PC-3 (cell line): ENCODE measurements at regions of chr11 and their contacts with region 1.

Region 1: GRCh38 chr11:44133335-44133946 is 38.0 kb downstream of the EXT2 start:
- DNase-seq: peak; percentile 59
- ATAC-seq: peak; percentile 69
- H3K4me3 ChIP-seq: no peak overlapping the region
- H3K27ac ChIP-seq: no peak overlapping the region
- H3K4me1 ChIP-seq: peaks cover 14% of the 10 kb centered on the region
- H3K27me3 ChIP-seq: no peaks in the 10 kb centered on the region
- CTCF ChIP-seq: peak; percentile 72

Region 2: DNA sequence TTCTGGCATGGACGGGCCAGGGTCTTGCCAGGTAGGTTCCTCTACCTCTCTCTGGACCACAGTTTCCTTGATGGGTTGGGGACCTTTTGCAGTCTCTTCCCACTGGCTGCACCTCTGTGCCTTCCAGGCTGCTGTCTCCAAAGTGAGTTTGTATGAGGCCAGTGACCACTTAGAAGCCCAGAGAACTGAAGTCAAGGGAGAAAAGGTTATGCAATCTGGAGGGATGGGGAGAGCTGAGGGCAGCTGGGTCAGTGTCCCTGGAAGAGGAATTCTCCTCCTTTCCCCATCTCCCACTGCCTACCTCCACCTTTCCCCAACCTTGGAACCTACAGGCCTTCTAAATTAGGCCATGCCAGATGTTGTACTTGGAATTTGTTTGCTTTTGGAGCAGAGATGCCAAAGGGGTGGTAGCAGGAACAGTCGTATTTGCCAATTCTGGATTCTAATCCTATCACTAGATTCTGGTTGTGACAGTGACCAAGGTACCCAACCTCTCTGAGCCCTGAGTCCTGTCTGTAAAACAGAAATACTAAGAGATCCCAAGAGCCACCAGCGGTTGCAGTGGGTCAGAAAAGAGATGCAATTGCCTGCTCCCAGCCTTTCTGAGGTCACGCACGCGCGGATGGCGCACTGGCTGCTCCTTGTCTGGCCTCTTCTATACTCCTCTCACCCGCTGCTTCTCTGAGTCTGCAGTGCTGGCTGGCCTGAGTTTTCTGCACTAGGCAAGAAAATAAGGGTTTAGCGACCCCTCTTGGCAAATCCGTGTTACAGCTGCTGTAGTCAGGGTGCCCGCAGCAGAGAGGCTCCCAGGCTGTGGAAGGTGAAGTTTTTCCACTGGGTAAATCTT is 96.4 kb before region 1 on chr11:
- CTCF ChIA-PET with region 1: no interaction called
- POLR2A ChIA-PET with region 1: no interaction called
- intact Hi-C with region 1: no loop called
- DNase-seq: peak; percentile 79
- ATAC-seq: peak; percentile 97
- H3K4me3 ChIP-seq: no peak overlapping the region
- H3K27ac ChIP-seq: no peak overlapping the region
- H3K4me1 ChIP-seq: no peaks in the 10 kb centered on the region
- H3K27me3 ChIP-seq: no peaks in the 10 kb centered on the region
- CTCF ChIP-seq: peak; percentile 84

Region 3: GRCh38 chr11:44208976-44209603 is 75.6 kb after region 1 on chr11:
- CTCF ChIA-PET with region 1: interaction called, 15 read pairs
- POLR2A ChIA-PET with region 1: no interaction called
- intact Hi-C with region 1: no loop called
- DNase-seq: no peak
- ATAC-seq: no peak
- H3K4me3 ChIP-seq: no peak overlapping the region
- H3K27ac ChIP-seq: no peak overlapping the region
- H3K4me1 ChIP-seq: no peaks in the 10 kb centered on the region
- H3K27me3 ChIP-seq: no peaks in the 10 kb centered on the region
- CTCF ChIP-seq: no peak

Region 4: DNA sequence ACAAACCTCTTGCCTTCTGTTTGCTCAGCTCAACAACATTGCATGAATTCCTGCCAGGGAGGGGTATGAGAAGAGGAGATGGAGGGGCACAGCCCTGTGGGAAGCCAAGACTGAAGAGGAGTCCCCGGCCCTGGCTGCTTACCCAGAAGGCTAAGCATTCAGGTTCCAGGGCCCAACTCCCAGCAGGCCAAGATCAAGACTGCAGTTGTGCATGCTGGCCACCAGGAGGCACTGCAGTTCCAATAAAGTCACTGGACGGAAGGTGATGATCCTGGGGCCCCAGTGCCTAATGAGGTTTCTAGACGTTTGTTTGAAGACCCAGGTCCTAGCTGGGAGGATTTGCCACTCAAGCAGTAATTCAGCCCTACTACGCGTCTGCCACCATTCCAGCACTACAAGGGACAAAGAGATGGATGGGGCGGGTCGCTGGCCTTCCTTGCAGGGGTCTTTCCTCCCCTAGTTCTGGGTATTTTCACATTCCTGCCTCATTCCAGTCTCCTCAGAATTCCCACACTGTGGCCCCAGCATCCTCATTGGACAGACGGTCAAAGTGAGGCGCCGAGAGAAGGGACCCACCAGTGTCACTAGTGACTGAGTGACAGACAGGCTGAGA is 152.9 kb after region 1 on chr11:
- CTCF ChIA-PET with region 1: no interaction called
- POLR2A ChIA-PET with region 1: no interaction called
- intact Hi-C with region 1: loop called (anchors 10 kb)
- DNase-seq: peak; percentile 70
- ATAC-seq: peak; percentile 60
- H3K4me3 ChIP-seq: no peak overlapping the region
- H3K27ac ChIP-seq: no peak overlapping the region
- H3K4me1 ChIP-seq: no peaks in the 10 kb centered on the region
- H3K27me3 ChIP-seq: no peaks in the 10 kb centered on the region
- CTCF ChIP-seq: peak; percentile 94

Region 5: GRCh38 chr11:44464741-44465140 is 331.3 kb after region 1 on chr11:
- CTCF ChIA-PET with region 1: no interaction called
- POLR2A ChIA-PET with region 1: no interaction called
- intact Hi-C with region 1: loop called (anchors 10 kb)
- DNase-seq: peak; percentile 37
- ATAC-seq: no peak
- H3K4me3 ChIP-seq: no peak overlapping the region
- H3K27ac ChIP-seq: no peak overlapping the region
- H3K4me1 ChIP-seq: no peaks in the 10 kb centered on the region
- H3K27me3 ChIP-seq: 0 out of 2 replicates have a peak, but pooled peaks cover 6% of the 10 kb centered on the region
- CTCF ChIP-seq: peak; percentile 38; the same call in 1 of the 2 replicates